A549 (cell line): ENCODE measurements at regions of chr12 and their contacts with region 1.

Region 1: GRCh38 chr12:55619354-55620138 is 17.1 kb upstream of the OR10P1 start:
- DNase-seq: peak; percentile 91 to 94
- ATAC-seq: peak; percentile 89 to 98
- H3K4me3 ChIP-seq: no peak overlapping the region
- H3K27ac ChIP-seq: peak overlapping the region in 1 of 2 experiments; percentile 38; a peak in 2 of 6 replicates
- H3K4me1 ChIP-seq: peaks cover 5% of the 10 kb centered on the region
- CTCF ChIP-seq: peak; percentile 98
- EP300 ChIP-seq: no peak
- POLR2A ChIP-seq: no peak
- RAD21 ChIP-seq: peak; percentile 91 to 92

Region 2: GRCh38 chr12:55188974-55189556 is 430.5 kb before region 1 on chr12:
- CTCF ChIA-PET with region 1: interaction called, 34 read pairs
- POLR2A ChIA-PET with region 1: no interaction called
- DNase-seq: peak; percentile 43 to 87
- ATAC-seq: peak; percentile 95 to 97
- H3K4me3 ChIP-seq: no peak overlapping the region
- H3K27ac ChIP-seq: no peak overlapping the region
- H3K4me1 ChIP-seq: no peaks in the 10 kb centered on the region
- CTCF ChIP-seq: peak; percentile 83
- EP300 ChIP-seq: no peak
- POLR2A ChIP-seq: no peak
- RAD21 ChIP-seq: peak; percentile 83 to 92

Region 3: DNA sequence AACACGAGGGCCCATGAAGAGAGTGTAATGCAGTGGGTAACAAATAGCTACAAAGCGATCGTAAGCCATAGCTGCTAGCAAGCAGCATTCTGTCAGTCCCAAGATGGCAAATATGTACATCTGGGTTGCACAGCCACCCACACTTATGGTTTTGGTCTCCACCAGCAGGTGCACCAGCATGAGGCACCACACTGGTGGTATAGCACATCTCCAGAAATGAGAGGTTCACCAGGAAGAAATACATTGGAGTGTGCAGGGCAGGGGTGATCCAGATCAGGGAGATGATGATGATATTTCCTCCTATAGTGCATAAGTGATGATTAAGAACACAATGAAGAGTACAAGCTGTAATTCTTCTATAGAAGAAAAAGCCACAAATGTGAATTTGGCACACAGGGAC is 425.2 kb before region 1 on chr12:
- CTCF ChIA-PET with region 1: interaction called, 34 read pairs
- POLR2A ChIA-PET with region 1: no interaction called
- DNase-seq: no peak
- ATAC-seq: no peak
- H3K4me3 ChIP-seq: no peak overlapping the region
- H3K27ac ChIP-seq: no peak overlapping the region
- H3K4me1 ChIP-seq: no peaks in the 10 kb centered on the region
- CTCF ChIP-seq: no peak
- EP300 ChIP-seq: no peak
- POLR2A ChIP-seq: no peak
- RAD21 ChIP-seq: no peak

Region 4: GRCh38 chr12:55607821-55608594 is 11.5 kb before region 1 on chr12:
- CTCF ChIA-PET with region 1: interaction called, 12 read pairs
- POLR2A ChIA-PET with region 1: no interaction called
- DNase-seq: no peak
- ATAC-seq: no peak
- H3K4me3 ChIP-seq: no peak overlapping the region
- H3K27ac ChIP-seq: no peak overlapping the region
- H3K4me1 ChIP-seq: no peaks in the 10 kb centered on the region
- CTCF ChIP-seq: no peak
- EP300 ChIP-seq: no peak
- POLR2A ChIP-seq: no peak
- RAD21 ChIP-seq: no peak